ENCODE measurements at regions of chr11 and their contacts with region 1.

Region 1: GRCh38 chr11:65040847-65041621 is at the start of gene SAC3D1:
- DNase-seq: peak; percentile 94
- H3K4me3 Mint-ChIP-seq: peak within 1 kb of the TSS; percentile 92
- H3K27ac Mint-ChIP-seq: peak within 1 kb of the TSS; percentile 98
- H3K4me1 Mint-ChIP-seq: peaks cover 19% of the 10 kb centered on the region
- H3K27me3 Mint-ChIP-seq: no peaks in the 10 kb centered on the region
- total RNA-seq, gene SAC3D1: 19.2 to 20.3 TPM

Region 2: DNA sequence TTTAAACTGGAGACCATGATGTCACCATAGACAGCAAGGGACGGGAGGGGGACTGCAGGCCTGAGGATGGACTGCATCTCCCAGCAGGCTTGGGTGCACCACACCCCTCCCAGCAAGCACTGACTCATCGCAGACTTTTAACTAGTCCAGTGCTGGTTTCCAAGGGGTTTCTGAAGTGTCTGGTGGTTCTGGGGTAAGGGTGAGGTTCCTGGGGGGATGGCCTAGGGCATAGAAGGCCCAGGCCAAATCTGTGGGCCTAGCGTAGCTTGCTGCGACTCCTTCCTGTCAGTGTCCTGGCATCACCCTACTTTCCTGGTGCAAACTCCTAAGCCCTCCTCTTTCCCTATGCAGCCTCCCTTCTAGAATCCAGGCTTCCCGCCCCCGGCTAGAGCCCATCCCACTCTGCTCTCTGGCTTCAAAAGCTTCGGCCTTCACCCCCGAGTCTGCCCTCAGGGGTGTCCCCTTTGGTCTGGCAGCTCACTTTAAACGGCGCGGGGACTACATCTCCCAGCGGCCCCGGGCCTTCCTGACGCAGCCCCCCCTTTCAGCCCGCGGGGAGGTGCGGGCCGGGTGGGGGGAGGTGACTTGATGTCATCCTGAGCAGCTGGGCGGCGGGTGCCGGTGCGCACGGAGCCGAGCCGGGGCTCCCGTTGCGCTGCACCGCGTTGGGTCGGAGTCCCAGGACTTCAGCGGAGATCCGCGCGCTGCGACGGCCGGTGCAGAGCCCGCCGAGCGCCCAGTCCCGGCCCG is 116.8 kb before region 1 on chr11 and contains the start of gene PPP2R5B:
- CTCF ChIA-PET with region 1: no interaction called
- intact Hi-C with region 1: loop called (anchors 1 kb)
- DNase-seq: peak; percentile 92
- H3K4me3 Mint-ChIP-seq: peak within 1 kb of the TSS; percentile 87
- H3K27ac Mint-ChIP-seq: peak within 1 kb of the TSS; percentile 93
- H3K4me1 Mint-ChIP-seq: peaks cover 19% of the 10 kb centered on the region
- H3K27me3 Mint-ChIP-seq: no peaks in the 10 kb centered on the region
- total RNA-seq, gene PPP2R5B: 3.3 to 4.6 TPM

Region 3: GRCh38 chr11:65027213-65028067 is 13.6 kb before region 1 on chr11 and contains the start of gene SNX15:
- CTCF ChIA-PET with region 1: interaction called, 3 read pairs
- intact Hi-C with region 1: loop called (anchors 1 kb)
- DNase-seq: peak; percentile 95
- H3K4me3 Mint-ChIP-seq: peak within 1 kb of the TSS; percentile 79
- H3K27ac Mint-ChIP-seq: peak within 1 kb of the TSS; percentile 82
- H3K4me1 Mint-ChIP-seq: peaks cover 19% of the 10 kb centered on the region
- H3K27me3 Mint-ChIP-seq: no peaks in the 10 kb centered on the region
- total RNA-seq, gene SNX15: 8.9 to 9.4 TPM

Region 4: GRCh38 chr11:65083834-65084597 is 43.0 kb after region 1 on chr11 and contains the starts of genes CDCA5 and ZFPL1:
- CTCF ChIA-PET with region 1: interaction called, 3 read pairs
- intact Hi-C with region 1: loop called (anchors 1 kb)
- DNase-seq: peak; percentile 97
- H3K4me3 Mint-ChIP-seq: peak within 1 kb of the TSS; percentile 92
- H3K27ac Mint-ChIP-seq: peak within 1 kb of the TSS; percentile 97
- H3K4me1 Mint-ChIP-seq: peaks cover 39% of the 10 kb centered on the region
- H3K27me3 Mint-ChIP-seq: no peaks in the 10 kb centered on the region
- total RNA-seq, gene CDCA5: 169 to 174 TPM
- total RNA-seq, gene ZFPL1: 24.2 to 25.6 TPM

Region 5: GRCh38 chr11:65111744-65112414 is 70.8 kb after region 1 on chr11 and contains the start of gene TM7SF2:
- CTCF ChIA-PET with region 1: no interaction called
- intact Hi-C with region 1: loop called (anchors 2 kb)
- DNase-seq: peak; percentile 96
- H3K4me3 Mint-ChIP-seq: peak within 1 kb of the TSS; percentile 80
- H3K27ac Mint-ChIP-seq: peak within 1 kb of the TSS; percentile 72
- H3K4me1 Mint-ChIP-seq: peaks cover 51% of the 10 kb centered on the region
- H3K27me3 Mint-ChIP-seq: no peaks in the 10 kb centered on the region
- total RNA-seq, gene TM7SF2: 10.9 to 11.9 TPM

Region 6: GRCh38 chr11:65204646-65205601 is 163.9 kb after region 1 on chr11:
- CTCF ChIA-PET with region 1: no interaction called
- intact Hi-C with region 1: no loop called
- DNase-seq: peak; percentile 54
- H3K4me3 Mint-ChIP-seq: no peak overlapping the region
- H3K27ac Mint-ChIP-seq: no peak overlapping the region
- H3K4me1 Mint-ChIP-seq: no peaks in the 10 kb centered on the region
- H3K27me3 Mint-ChIP-seq: no peaks in the 10 kb centered on the region

Measured in activated naive CD4-positive, alpha-beta T cell treated with anti-CD3 and anti-CD28 coated beads for 36 hours (primary cell).